Activated T-helper 2 cell treated with anti-CD3 and anti-CD28 coated beads, Interferon-gamma antibody, Interleukin-2, Interleukin-4, amounts not matched to agents 10 μg/mL and 5 μg/mL and 100 μg/mL, durations not matched to agents 14 hours and 24 hours and 36 hours (primary cell): ENCODE measurements at regions of chr16 and their contacts with region 1.

Region 1: DNA sequence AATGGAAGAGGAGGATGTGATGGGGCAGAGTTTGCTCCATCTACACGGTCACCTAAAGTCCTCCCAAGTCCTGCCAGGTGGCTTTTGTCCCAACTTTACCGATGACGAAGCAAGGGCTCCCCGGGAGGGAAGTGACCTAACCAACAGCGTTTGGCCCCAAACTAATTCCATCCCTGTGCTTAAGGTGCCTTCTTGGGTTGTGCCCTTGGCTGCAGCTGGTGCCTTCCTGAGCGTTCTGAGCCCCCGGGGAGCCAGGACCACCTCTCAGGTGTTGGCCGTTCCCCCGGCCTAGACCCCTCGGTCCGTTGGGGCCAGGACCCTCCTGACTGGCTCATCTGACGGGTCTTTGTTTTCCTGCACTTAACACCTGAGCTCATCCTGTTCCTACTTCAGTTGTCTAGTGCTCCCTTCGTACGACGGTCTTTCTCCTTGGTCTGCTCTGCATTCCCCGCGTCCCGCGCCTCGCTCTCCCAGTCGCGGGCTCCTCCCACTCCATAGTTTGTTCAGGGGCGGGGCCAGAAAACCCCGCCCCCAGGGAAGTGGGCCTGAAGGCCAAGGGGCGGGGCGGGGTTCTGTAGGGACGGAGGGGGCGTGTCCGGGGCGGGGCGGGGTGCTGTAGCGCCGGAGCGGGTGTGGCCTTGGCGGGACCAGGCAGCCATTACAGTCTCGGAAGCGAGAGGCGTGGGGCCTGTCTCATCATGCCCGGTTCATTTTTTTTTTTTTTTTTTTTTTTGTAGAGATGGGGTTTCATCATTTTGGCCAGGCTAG is 822 bp upstream of the ZSCAN10 start:
- DNase-seq: peak; percentile 86
- H3K4me3 Mint-ChIP-seq: peak overlapping the region; percentile 69
- H3K27ac Mint-ChIP-seq: peak overlapping the region; percentile 47
- H3K4me1 Mint-ChIP-seq: peaks cover 29% of the 10 kb centered on the region
- H3K27me3 Mint-ChIP-seq: peaks cover 4% of the 10 kb centered on the region

Region 2: DNA sequence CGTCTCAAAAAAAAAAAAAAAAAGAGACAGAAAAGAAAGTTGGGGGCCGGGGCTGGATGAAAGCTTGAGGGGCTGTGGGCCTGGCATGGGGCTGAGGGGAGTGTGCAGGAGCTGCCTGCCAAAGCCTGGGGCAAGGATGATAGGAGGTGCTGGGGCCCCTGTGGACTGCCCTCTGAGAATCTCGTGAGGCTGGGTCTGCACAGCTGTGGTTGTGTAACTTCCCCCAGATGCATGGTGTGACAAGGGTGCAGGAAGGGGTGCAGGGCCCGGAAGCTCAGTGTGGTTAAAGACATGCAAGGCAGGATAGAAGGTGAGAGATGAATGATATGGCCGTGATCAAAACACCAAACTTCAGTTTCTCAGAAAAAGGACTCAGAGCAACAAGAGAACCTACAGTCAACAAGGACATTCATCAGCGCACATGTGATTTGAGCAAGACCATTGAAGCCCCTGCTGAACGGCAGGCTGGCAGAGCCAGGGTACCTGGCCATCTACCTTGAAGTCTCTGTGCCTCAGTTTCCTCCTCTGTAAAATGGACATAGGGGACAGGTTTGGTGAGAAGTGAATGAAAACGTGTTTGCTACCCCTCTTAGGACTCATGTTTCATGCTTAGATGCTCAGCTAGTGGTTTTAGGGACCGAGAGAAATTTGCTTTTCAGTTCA is 24.9 kb before region 1 on chr16:
- intact Hi-C with region 1: loop called (anchors 2 kb)
- DNase-seq: peak; percentile 90
- H3K4me3 Mint-ChIP-seq: peak overlapping the region; percentile 81
- H3K27ac Mint-ChIP-seq: peak overlapping the region; percentile 100
- H3K4me1 Mint-ChIP-seq: peaks cover 75% of the 10 kb centered on the region
- H3K27me3 Mint-ChIP-seq: no peaks in the 10 kb centered on the region

Region 3: DNA sequence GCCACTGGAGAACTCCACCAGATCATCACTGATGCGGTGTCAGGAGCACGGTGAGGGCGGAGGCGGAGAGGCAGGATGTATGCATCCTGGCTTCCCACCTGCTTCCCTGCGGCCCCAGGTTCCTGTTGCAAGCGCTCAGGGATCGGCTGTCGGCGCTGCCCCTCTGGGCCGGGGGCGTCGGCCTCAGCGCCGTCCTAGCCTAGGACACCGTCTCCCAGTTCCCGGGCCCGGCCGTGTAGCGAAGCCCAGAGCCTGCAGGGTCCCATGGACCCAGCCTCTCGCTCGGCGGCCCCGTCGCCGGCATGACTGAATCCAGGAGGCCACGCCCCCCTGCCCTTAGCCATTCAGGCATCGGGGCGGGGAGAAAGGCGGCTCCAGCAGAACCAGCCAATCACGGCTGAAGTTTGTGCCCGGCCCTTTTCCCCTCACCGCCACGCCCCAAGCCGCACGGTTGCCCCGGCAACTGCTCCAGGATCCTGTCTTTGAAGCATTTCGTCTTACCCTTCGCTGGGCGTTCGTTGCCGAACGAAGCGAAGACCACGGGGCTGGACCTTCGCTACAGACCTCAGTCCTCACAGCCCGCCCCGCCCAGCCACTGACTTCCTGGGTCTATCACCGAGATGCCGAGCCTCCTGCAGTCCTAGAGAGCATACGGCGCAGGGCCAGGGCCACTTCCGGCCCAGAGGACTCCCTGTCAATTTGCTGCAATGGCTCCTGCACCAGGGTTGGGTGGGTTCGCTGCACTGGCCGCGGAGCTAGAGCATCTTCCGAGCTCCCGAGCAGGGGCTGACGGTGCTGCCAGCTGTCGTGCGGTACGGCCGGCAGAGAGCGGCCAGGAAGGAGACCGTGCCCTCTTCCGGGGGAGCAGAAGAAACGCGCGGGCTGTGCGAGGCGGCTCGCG is 24.3 kb after region 1 on chr16:
- intact Hi-C with region 1: loop called (anchors 1 kb)
- DNase-seq: peak; percentile 97
- H3K4me3 Mint-ChIP-seq: peak overlapping the region; percentile 96
- H3K27ac Mint-ChIP-seq: peak overlapping the region; percentile 92
- H3K4me1 Mint-ChIP-seq: peaks cover 34% of the 10 kb centered on the region
- H3K27me3 Mint-ChIP-seq: no peaks in the 10 kb centered on the region

Region 4: GRCh38 chr16:3129137-3130131 is 29.5 kb after region 1 on chr16:
- intact Hi-C with region 1: loop called (anchors 1 kb)
- DNase-seq: peak; percentile 81
- H3K4me3 Mint-ChIP-seq: peak overlapping the region; percentile 87
- H3K27ac Mint-ChIP-seq: peak overlapping the region; percentile 80
- H3K4me1 Mint-ChIP-seq: peaks cover 46% of the 10 kb centered on the region
- H3K27me3 Mint-ChIP-seq: no peaks in the 10 kb centered on the region

Region 5: DNA sequence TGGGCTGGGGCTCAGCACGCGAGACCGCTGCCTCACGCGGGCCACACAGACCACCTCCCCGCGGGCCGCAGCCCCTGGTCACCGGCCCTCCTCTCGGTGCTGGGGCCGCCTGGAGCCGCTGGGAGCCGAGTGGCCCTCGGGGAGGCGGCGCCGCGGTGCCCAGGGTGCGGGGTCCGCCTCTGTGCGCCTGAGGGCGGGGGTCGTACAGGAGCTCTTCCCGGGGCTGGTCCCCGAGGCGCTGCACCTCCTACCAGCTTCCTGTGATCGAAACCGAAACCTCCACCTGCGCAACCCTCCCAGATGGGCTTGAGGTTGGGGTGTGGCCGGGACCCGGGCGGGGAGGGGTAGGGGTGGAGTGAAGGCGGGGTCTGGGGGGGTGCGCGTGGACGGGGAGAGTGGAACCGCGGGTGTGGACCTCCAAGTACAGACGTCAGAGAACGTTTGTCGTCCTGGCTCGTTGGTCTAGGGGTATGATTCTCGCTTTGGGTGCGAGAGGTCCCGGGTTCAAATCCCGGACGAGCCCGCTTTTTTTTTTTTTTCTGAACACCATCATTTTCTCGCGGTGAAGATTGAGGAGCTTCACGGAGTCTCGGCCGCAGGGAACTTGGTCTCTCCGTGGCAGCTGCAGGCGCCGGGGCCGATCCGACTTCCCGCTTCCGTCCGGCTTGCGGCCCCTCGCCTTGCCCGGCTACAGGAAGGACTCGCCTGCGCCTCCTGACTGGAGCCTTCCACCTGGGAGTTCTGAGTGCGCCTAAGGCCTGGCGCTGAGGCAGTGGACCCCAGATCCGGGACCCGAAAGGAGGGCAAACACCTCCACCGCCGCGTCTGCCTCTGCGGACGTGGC is 58.8 kb after region 1 on chr16:
- intact Hi-C with region 1: loop called (anchors 10 kb)
- DNase-seq: peak; percentile 85
- H3K4me3 Mint-ChIP-seq: peak overlapping the region; percentile 88
- H3K27ac Mint-ChIP-seq: peak overlapping the region; percentile 56
- H3K4me1 Mint-ChIP-seq: peaks cover 21% of the 10 kb centered on the region
- H3K27me3 Mint-ChIP-seq: peaks cover 21% of the 10 kb centered on the region